ENCODE measurements at regions of chr4 and their contacts with region 1.

Region 1: DNA sequence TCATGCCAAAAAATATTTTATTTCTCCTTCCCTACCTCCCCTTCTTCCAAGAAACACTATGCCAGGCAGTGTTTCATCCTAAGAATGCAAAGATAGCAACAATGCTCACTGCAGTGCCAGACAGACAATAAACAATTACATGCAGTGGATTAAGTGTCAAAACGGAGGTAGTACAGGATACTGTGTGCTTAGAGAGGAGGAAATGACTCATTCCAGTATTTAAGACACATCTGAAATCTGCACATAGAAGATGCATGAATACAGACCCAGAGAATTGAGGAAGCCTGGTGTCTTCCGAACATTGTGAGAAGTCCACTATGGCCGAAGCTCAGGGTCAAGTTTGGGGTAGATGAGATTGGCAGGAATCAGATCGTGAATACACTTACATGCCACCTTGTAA is 326.4 kb downstream of the PPP3CA start:
- DNase-seq: no peak
- H3K4me3 Mint-ChIP-seq: no peak overlapping the region
- H3K27ac Mint-ChIP-seq: no peak overlapping the region
- H3K4me1 Mint-ChIP-seq: peaks cover 27% of the 10 kb centered on the region
- H3K27me3 Mint-ChIP-seq: peaks cover 4% of the 10 kb centered on the region

Region 2: GRCh38 chr4:100082852-100083251 is 938.1 kb before region 1 on chr4:
- CTCF ChIA-PET with region 1: no interaction called
- intact Hi-C with region 1: loop called (anchors 1 kb)
- DNase-seq: peak; percentile 35
- H3K4me3 Mint-ChIP-seq: no peak overlapping the region
- H3K27ac Mint-ChIP-seq: peak overlapping the region; percentile 89
- H3K4me1 Mint-ChIP-seq: peaks cover 72% of the 10 kb centered on the region
- H3K27me3 Mint-ChIP-seq: peaks cover 2% of the 10 kb centered on the region

Region 3: GRCh38 chr4:101037938-101038413 is 17.0 kb after region 1 on chr4:
- CTCF ChIA-PET with region 1: no interaction called
- intact Hi-C with region 1: loop called (anchors 1 kb)
- DNase-seq: no peak
- H3K4me3 Mint-ChIP-seq: no peak overlapping the region
- H3K27ac Mint-ChIP-seq: no peak overlapping the region
- H3K4me1 Mint-ChIP-seq: peaks cover 13% of the 10 kb centered on the region
- H3K27me3 Mint-ChIP-seq: no peaks in the 10 kb centered on the region

Region 4: GRCh38 chr4:101156619-101157310 is 135.8 kb after region 1 on chr4:
- CTCF ChIA-PET with region 1: no interaction called
- intact Hi-C with region 1: loop called (anchors 1 kb)
- DNase-seq: no peak
- H3K4me3 Mint-ChIP-seq: no peak overlapping the region
- H3K27ac Mint-ChIP-seq: no peak overlapping the region
- H3K4me1 Mint-ChIP-seq: peaks cover 28% of the 10 kb centered on the region
- H3K27me3 Mint-ChIP-seq: no peaks in the 10 kb centered on the region

Region 5: DNA sequence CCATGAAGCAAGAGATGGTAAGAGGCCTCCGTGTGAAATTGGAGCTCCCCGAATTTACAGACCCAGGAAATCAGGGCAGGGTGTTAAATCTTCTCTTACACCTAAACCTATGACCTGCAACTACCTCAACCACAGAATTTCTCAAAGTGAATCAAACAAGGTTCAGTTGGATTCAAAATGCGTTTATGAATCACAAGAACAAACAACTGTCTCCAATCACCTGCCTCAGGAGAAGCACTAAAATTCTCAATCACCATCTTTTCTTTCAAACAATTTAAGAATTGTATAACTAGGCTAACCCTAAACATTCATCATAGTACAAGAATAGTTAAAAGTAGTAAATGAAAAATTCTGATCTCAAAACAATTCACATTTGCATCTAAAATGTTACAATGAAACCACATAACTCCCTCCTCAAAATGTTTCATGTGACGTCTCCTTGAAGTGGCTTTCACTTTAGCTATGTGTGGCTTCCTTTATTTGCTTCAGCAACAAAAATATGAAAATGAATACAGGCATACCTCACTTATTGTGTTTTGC is 307.2 kb after region 1 on chr4:
- CTCF ChIA-PET with region 1: no interaction called
- intact Hi-C with region 1: loop called (anchors 1 kb)
- DNase-seq: peak; percentile 52
- H3K4me3 Mint-ChIP-seq: no peak overlapping the region
- H3K27ac Mint-ChIP-seq: peak overlapping the region; percentile 73
- H3K4me1 Mint-ChIP-seq: peaks cover 28% of the 10 kb centered on the region
- H3K27me3 Mint-ChIP-seq: peaks cover 25% of the 10 kb centered on the region

Region 6: GRCh38 chr4:101527188-101527587 is 506.2 kb after region 1 on chr4:
- CTCF ChIA-PET with region 1: no interaction called
- intact Hi-C with region 1: loop called (anchors 1 kb)
- DNase-seq: peak; percentile 88
- H3K4me3 Mint-ChIP-seq: no peak overlapping the region
- H3K27ac Mint-ChIP-seq: no peak overlapping the region
- H3K4me1 Mint-ChIP-seq: peaks cover 15% of the 10 kb centered on the region
- H3K27me3 Mint-ChIP-seq: peaks cover 45% of the 10 kb centered on the region

Region 7: GRCh38 chr4:102554482-102554881 is 1533.5 kb after region 1 on chr4:
- CTCF ChIA-PET with region 1: no interaction called
- intact Hi-C with region 1: loop called (anchors 5 kb)
- DNase-seq: no peak
- H3K4me3 Mint-ChIP-seq: no peak overlapping the region
- H3K27ac Mint-ChIP-seq: no peak overlapping the region
- H3K4me1 Mint-ChIP-seq: peaks cover 41% of the 10 kb centered on the region
- H3K27me3 Mint-ChIP-seq: no peaks in the 10 kb centered on the region